ENCODE measurements at regions of chr19 and their contacts with region 1.

Region 1: DNA sequence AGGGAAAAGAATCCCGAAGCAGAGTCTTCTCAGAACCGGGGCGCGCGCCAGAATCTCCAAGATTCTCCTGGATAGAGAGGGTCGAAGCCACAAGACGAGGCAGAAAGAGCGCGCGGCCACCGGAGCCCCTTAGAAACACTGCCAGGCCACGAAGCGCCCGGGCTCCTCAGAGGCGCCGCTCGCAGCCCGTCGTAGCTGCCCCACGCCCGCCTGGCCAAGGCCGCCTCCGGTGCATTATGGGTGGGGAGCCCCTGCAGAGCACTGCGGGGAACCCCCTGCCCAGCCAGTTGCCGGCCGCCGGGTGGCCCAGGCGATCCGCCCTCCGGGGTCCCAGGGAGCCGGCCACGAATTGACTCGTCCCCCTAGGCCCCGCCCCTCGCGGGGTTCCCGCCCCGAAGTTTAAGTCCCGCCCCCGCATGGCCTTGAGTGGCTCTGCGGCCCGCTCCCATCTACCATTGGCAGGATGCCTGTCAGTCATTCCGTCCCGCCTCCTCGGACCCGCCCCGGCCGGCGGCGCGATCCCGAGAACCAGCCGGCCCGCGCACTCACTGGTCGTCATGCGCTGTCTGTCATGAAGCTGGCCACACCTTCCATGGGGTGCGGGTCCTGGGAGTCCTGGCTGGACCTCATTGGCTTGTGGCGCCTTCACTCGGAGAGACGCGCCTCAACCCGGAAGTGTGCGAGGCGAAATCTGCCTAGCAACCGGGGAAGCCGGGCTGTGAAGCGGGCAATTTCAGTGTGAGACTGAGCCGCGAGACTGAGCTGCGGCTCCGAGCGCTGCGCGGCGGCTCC is 20.2 kb upstream of the GATAD2A start:
- DNase-seq: peak; percentile 99
- ATAC-seq: peak; percentile 96
- H3K4me3 ChIP-seq: peak overlapping the region; percentile 49 to 87 (median 75); a peak in 5 of 6 replicates
- H3K27ac ChIP-seq: peak overlapping the region; percentile 86
- H3K4me1 ChIP-seq: peaks cover 65% of the 10 kb centered on the region
- H3K27me3 ChIP-seq: no peaks in the 10 kb centered on the region; a peak in 1 of 5 replicates
- CTCF ChIP-seq: peak; percentile 44
- EP300 ChIP-seq: peak in 1 of 2 experiments; percentile 65; a peak in 1 of 4 replicates
- POLR2A ChIP-seq: peak in 1 of 2 experiments; percentile 49; a peak in 2 of 4 replicates
- RAD21 ChIP-seq: peak; percentile 58

Region 2: DNA sequence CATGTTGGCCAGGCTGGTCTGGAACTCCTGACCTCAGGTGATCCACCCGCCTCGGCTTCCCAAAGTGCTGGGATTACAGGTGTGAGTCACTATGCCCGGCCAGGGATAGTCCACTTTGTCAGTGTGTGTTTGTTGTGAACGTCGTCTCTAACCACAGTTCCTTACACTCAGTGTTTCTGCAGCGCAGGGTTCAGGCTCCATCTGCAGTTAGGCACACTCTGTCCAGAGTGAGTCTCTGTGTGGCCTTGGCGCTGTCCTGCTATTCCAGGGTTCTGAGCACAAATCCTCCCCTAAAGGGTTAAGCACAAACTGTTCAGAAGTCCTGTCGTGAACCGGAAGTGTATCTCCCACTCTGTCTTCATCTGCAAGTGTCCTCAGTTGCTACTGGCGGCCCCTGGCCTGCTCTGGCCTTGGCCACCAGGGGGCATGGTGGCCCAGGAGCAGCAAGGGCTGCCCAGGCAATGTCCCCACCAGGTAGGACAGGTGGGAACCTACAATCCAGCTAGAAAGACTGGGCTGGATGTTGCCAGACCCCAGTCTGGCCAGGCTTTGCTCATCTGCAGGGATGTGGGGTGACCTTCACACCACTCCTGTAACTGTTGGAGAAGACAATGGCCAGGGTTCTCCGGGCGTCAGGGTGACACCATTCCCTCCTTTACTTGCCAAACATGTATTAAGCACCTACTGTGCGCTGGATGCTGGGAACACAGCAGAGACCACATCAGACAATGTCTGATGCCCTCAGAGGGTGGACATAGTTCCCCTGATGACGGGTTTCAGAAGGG is 18.5 kb before region 1 on chr19:
- CTCF ChIA-PET with region 1: no interaction called
- POLR2A ChIA-PET with region 1: interaction called, 3 read pairs
- in situ Hi-C with region 1: no loop called
- intact Hi-C with region 1: loop called (anchors 1 kb)
- DNase-seq: peak; percentile 92
- ATAC-seq: peak; percentile 89
- H3K4me3 ChIP-seq: peak overlapping the region; percentile 34 to 67 (median 50)
- H3K27ac ChIP-seq: peak overlapping the region; percentile 54
- H3K4me1 ChIP-seq: peaks cover 52% of the 10 kb centered on the region
- H3K27me3 ChIP-seq: no peaks in the 10 kb centered on the region
- CTCF ChIP-seq: peak; percentile 100
- EP300 ChIP-seq: no peak
- POLR2A ChIP-seq: peak; percentile 20 to 52; a peak in 2 of 4 replicates
- RAD21 ChIP-seq: peak; percentile 95

Region 3: DNA sequence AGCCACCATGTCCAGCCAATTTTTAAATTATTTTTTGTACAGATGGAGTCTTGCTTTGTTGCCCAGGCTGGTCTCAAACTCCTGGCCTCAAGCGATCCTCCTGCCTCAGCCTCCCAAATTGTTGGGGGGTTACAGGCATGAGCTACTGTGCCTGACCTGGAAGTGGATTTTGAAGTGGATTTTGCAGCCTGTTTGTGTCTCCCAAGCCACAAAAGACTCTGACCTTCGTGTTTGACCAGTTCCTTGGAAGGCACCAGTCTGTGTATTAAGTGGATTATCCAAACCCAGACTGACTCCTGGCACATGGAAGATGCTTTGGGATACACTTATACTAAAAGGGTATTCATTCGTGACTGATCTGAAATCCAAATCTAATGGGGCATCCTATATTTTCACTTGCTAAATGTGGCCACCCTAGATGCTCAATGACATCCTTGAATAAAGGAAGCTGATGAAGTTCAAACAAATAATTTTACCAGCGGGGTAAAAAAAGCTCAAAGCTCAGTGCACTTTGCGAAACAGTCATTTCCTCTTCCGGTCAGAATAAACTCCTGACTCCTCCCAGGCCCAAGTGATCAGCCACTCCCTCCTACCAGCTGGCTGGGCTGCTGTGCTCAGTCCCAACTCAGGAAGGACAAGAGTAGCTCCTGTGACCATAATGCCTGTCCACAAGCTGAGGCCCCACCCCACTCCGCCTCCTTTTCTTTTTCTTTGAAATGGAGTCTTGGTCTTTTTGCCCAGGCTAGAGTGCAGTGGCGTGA is 12.5 kb before region 1 on chr19:
- CTCF ChIA-PET with region 1: no interaction called
- POLR2A ChIA-PET with region 1: interaction called, 14 read pairs
- in situ Hi-C with region 1: no loop called
- intact Hi-C with region 1: loop called (anchors 1 kb)
- DNase-seq: peak; percentile 90
- ATAC-seq: peak; percentile 96
- H3K4me3 ChIP-seq: peak overlapping the region; percentile 19 to 48 (median 37); a peak in 5 of 6 replicates
- H3K27ac ChIP-seq: peak overlapping the region; percentile 63
- H3K4me1 ChIP-seq: peaks cover 66% of the 10 kb centered on the region
- H3K27me3 ChIP-seq: no peaks in the 10 kb centered on the region
- CTCF ChIP-seq: no peak
- EP300 ChIP-seq: peak in 1 of 2 experiments; percentile 44; a peak in 1 of 4 replicates
- POLR2A ChIP-seq: peak; percentile 39 to 74; a peak in 2 of 4 replicates
- RAD21 ChIP-seq: no peak

Measured in HepG2 (cell line).